ENCODE measurements at regions of chr7 and their contacts with region 1.

Region 1: GRCh38 chr7:129054438-129055293 is at the start of gene TNPO3:
- DNase-seq: peak; percentile 64 to 96
- H3K4me3 ChIP-seq: peak within 1 kb of the TSS; percentile 75 to 91
- H3K27ac ChIP-seq: peak within 1 kb of the TSS; percentile 94 to 97
- H3K4me1 ChIP-seq: peaks cover 0 to 11% of the 10 kb centered on the region in 2 donors
- H3K27me3 ChIP-seq: no peaks in the 10 kb centered on the region
- CTCF ChIP-seq: no peak
- total RNA-seq, gene TNPO3: 59.4 TPM

Region 2: GRCh38 chr7:128343554-128344430 is 710.9 kb before region 1 on chr7 and contains the start of gene RBM28:
- intact Hi-C with region 1: loop called (anchors 5 kb)
- DNase-seq: peak; percentile 59 to 92
- H3K4me3 ChIP-seq: peak within 1 kb of the TSS; percentile 61 to 76
- H3K27ac ChIP-seq: peak within 1 kb of the TSS; percentile 66 to 69
- H3K4me1 ChIP-seq: peaks cover 4 to 13% of the 10 kb centered on the region in 2 donors
- H3K27me3 ChIP-seq: no peaks in the 10 kb centered on the region
- CTCF ChIP-seq: no peak
- total RNA-seq, gene RBM28: 23.8 TPM

Region 3: DNA sequence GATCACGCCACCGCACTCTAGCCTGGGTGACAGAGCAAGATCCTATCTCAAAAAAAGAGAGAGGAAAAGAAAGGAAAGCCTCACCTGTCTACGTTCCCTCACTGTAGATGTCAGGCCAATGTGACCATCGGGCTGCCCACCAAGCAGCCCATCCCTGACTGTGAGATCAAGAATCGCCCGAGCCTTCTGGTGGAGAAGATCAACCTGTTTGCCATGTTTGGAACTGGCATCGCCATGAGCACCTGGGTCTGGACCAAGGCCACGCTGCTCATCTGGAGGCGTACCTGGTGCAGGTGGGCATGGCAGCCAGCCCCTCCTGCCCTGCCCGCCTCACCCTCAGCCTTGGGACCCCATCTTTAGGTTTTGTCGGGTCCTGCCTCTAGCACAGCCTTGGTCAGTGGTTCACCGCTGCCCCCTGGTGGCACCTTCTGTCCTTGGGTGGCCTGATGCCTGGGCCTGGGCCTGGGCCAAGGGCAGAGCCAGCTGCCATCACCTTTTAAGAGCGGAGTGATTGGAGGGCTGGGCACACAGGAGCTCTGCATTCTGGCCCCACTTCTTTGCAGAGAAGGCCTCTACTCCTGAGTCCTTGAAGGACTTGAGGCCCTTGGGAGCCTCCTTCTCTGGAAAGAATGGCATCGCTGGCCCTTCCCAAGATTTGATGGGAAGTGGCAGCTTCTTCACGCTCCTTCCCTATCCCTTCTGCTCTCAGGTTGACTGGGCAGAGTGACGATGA is 155.8 kb after region 1 on chr7:
- intact Hi-C with region 1: loop called (anchors 5 kb)
- DNase-seq: peak in 1 of 2 donors; percentile 88
- H3K4me3 ChIP-seq: no peak overlapping the region
- H3K27ac ChIP-seq: no peak overlapping the region
- H3K4me1 ChIP-seq: no peaks in the 10 kb centered on the region
- H3K27me3 ChIP-seq: no peaks in the 10 kb centered on the region
- CTCF ChIP-seq: peak; percentile 79 to 93 (median 89)